ENCODE measurements at regions of chrX and their contacts with region 1.

Region 1: DNA sequence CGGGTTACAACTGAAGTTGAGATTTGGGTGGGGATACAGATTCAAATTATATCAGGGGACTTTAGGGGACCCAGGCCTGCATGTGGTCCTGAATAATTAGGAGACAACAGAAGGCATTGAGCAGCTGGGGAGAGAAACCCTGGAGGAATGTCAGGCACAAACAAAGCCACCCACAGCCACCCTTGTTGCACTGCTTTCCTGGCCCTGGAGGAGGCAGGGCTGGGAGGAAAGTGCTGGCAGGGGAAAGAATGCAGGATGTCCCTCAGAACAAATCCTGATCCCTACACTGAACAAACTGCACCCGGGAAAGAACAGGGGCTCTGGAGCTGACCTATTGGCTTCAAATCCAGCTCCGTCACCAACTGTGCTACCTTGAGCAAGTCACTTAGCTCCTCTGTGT is 214.1 kb upstream of the ATP6AP2 start:
- DNase-seq: no peak
- H3K4me3 ChIP-seq: no peak overlapping the region
- H3K27ac ChIP-seq: no peak overlapping the region
- H3K4me1 ChIP-seq: no peaks in the 10 kb centered on the region
- H3K27me3 ChIP-seq: no peaks in the 10 kb centered on the region
- CTCF ChIP-seq: no peak
- EP300 ChIP-seq: no peak
- POLR2A ChIP-seq: no peak

Region 2: GRCh38 chrX:39874202-39874816 is 492.4 kb before region 1 on chrX:
- intact Hi-C with region 1: no loop called
- DNase-seq: no peak
- H3K4me3 ChIP-seq: no peak overlapping the region
- H3K27ac ChIP-seq: no peak overlapping the region
- H3K4me1 ChIP-seq: peaks cover 2% of the 10 kb centered on the region
- H3K27me3 ChIP-seq: no peaks in the 10 kb centered on the region
- CTCF ChIP-seq: no peak
- EP300 ChIP-seq: no peak
- POLR2A ChIP-seq: no peak

Region 3: GRCh38 chrX:40120838-40121682 is 245.6 kb before region 1 on chrX:
- intact Hi-C with region 1: no loop called
- DNase-seq: no peak
- H3K4me3 ChIP-seq: no peak overlapping the region
- H3K27ac ChIP-seq: no peak overlapping the region
- H3K4me1 ChIP-seq: no peaks in the 10 kb centered on the region
- H3K27me3 ChIP-seq: no peaks in the 10 kb centered on the region
- CTCF ChIP-seq: no peak
- EP300 ChIP-seq: no peak
- POLR2A ChIP-seq: no peak

Region 4: DNA sequence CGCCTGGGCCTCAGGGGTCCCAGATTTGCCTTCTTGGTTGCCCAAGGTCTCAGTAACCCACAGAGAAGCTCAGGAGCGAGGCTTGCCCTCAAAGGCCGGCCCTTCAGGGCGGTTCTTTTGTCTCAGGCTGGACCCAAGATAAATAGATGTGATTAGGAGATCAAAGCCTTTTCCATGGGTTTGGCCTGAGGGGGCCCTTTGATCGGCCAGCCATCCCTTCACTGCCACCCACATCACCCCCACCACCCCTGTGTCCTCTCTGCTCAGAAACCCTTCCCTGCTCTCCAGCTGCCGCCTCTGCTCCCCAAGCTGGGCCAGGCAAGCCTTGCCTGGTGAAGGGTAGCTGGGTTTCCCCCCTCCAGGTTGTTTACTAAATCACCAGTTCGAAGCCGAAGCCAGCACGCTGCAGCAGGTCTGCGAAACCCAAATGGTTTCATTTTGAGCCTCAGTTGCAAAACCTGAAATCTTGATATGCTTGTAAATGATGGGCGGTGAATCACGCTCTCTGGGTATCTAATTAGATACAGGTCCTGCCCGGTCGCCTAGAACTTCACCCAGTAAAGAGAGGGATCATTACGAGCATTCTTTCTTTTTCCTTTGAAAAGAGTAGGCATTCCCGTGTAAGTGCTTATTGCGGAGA is 66.3 kb before region 1 on chrX:
- intact Hi-C with region 1: loop called in 1 of 4 experiments (anchors 10 kb)
- DNase-seq: no peak
- H3K4me3 ChIP-seq: no peak overlapping the region
- H3K27ac ChIP-seq: no peak overlapping the region
- H3K4me1 ChIP-seq: no peaks in the 10 kb centered on the region
- H3K27me3 ChIP-seq: no peaks in the 10 kb centered on the region
- CTCF ChIP-seq: no peak
- EP300 ChIP-seq: no peak
- POLR2A ChIP-seq: no peak